Activated CD8-positive, alpha-beta T cell treated with anti-CD3 and anti-CD28 coated beads for 36 hours (primary cell): ENCODE measurements at regions of chr10 and their contacts with region 1.

Region 1: DNA sequence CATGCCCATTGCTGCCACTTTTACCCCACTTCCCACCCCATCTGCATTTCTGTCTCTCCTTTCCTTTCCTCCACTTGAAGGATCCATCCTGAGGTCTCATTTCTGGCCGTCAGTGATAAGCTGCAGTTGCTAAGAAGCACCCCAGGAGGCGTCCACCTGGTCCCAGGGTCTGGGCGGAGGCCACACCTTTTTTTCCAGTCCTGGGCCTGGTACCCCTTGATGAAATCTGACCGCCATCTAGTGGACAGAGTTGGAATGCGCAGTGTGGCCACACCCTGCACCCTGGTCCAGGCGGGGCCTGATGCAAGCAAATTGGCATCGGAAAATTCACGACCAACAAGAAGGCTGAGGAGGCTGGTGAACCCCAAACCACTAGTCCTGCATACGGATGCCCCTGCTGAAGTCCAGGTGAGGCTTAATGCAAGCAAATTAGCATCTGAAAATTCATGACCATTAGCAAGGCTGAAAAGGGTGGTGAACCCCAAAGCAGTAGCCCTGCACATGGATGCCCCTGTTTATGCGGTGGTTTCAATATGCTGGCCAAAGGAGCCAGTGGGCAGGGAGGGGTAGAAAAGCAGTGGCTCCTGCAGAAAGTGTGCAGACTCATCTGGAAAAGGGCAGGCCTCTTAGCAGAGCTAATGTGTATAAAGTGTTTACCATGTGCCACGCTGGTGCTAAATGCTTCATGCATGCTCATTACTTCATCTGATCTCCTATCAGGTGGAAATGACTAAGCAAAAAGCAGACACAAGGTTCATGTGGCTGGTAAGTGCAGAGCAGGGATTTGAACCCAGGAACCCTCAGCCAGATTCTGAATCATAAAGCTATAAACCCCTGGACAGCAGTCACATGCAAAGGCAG is 43.2 kb downstream of the GPAM start:
- DNase-seq: peak; percentile 89
- ATAC-seq: peak; percentile 100
- H3K4me3 Mint-ChIP-seq: no peak overlapping the region
- H3K27ac Mint-ChIP-seq: no peak overlapping the region
- H3K4me1 Mint-ChIP-seq: no peaks in the 10 kb centered on the region
- H3K27me3 Mint-ChIP-seq: peaks cover 3% of the 10 kb centered on the region
- CTCF ChIP-seq: peak; percentile 86

Region 2: GRCh38 chr10:111756217-111757061 is 383.9 kb before region 1 on chr10:
- CTCF ChIA-PET with region 1: interaction called, 22 read pairs
- POLR2A ChIA-PET with region 1: no interaction called
- intact Hi-C with region 1: no loop called
- DNase-seq: peak; percentile 34
- ATAC-seq: no peak
- H3K4me3 Mint-ChIP-seq: no peak overlapping the region
- H3K27ac Mint-ChIP-seq: no peak overlapping the region
- H3K4me1 Mint-ChIP-seq: no peaks in the 10 kb centered on the region
- H3K27me3 Mint-ChIP-seq: peaks cover 9% of the 10 kb centered on the region
- CTCF ChIP-seq: peak; percentile 23

Region 3: DNA sequence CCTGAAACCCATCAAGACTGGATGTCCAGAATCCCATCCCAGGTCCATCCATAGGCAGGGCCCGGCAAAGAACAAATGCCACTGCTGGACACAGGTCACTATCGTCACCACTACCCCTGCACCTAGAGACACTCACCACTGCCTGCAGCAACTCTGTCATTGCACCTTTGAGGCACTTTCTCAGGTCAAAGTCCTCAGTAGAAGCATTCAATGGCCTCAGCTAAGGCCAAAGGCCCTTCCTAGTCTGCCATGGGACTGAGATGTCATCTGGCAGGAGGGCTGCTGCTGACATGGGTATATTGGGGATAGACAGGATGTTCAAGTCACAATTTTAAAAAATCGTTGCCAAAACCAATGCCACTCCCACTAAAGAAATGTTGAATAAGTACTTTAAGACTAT is 15.5 kb before region 1 on chr10:
- CTCF ChIA-PET with region 1: interaction called, 86 read pairs
- POLR2A ChIA-PET with region 1: no interaction called
- intact Hi-C with region 1: no loop called
- DNase-seq: no peak
- ATAC-seq: no peak
- H3K4me3 Mint-ChIP-seq: no peak overlapping the region
- H3K27ac Mint-ChIP-seq: no peak overlapping the region
- H3K4me1 Mint-ChIP-seq: no peaks in the 10 kb centered on the region
- H3K27me3 Mint-ChIP-seq: no peaks in the 10 kb centered on the region
- CTCF ChIP-seq: no peak

Region 4: DNA sequence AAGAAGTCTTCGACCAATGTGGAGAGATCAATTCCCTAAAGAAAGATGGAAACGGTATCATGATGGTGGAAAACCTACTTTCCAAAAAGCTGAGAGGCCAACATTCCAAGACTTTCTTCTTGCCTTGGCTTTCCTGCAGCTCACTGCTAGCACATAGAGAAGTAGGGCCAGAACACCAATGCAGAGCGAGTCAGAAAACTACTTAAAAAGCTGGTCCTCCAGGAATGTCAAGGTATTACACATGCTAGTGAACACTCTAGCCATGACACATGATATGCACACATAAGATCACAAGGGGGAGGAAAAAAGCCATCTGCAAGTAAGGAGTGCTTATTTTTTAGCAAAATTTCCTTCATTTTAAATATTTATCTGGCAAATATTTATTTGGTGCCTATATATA is 20.5 kb after region 1 on chr10:
- CTCF ChIA-PET with region 1: interaction called, 16 read pairs
- POLR2A ChIA-PET with region 1: no interaction called
- intact Hi-C with region 1: no loop called
- DNase-seq: no peak
- ATAC-seq: no peak
- H3K4me3 Mint-ChIP-seq: no peak overlapping the region
- H3K27ac Mint-ChIP-seq: no peak overlapping the region
- H3K4me1 Mint-ChIP-seq: no peaks in the 10 kb centered on the region
- H3K27me3 Mint-ChIP-seq: no peaks in the 10 kb centered on the region
- CTCF ChIP-seq: no peak

Region 5: GRCh38 chr10:112183329-112184051 is 43.1 kb after region 1 on chr10 and contains the start of gene GPAM:
- CTCF ChIA-PET with region 1: interaction called, 15 read pairs
- POLR2A ChIA-PET with region 1: no interaction called
- intact Hi-C with region 1: no loop called
- DNase-seq: peak; percentile 98
- ATAC-seq: peak; percentile 96
- H3K4me3 Mint-ChIP-seq: peak within 1 kb of the TSS; percentile 96
- H3K27ac Mint-ChIP-seq: peak within 1 kb of the TSS; percentile 92
- H3K4me1 Mint-ChIP-seq: peaks cover 18% of the 10 kb centered on the region
- H3K27me3 Mint-ChIP-seq: no peaks in the 10 kb centered on the region
- CTCF ChIP-seq: no peak
- total RNA-seq, gene GPAM: 7.4 to 8.6 TPM

Region 6: GRCh38 chr10:112295853-112296830 is 155.8 kb after region 1 on chr10:
- CTCF ChIA-PET with region 1: no interaction called
- POLR2A ChIA-PET with region 1: no interaction called
- intact Hi-C with region 1: no loop called
- DNase-seq: no peak
- ATAC-seq: no peak
- H3K4me3 Mint-ChIP-seq: no peak overlapping the region
- H3K27ac Mint-ChIP-seq: no peak overlapping the region
- H3K4me1 Mint-ChIP-seq: no peaks in the 10 kb centered on the region
- H3K27me3 Mint-ChIP-seq: peaks cover 5% of the 10 kb centered on the region
- CTCF ChIP-seq: no peak

Region 7: GRCh38 chr10:112314822-112315474 is 174.6 kb after region 1 on chr10:
- CTCF ChIA-PET with region 1: interaction called, 29 read pairs
- POLR2A ChIA-PET with region 1: no interaction called
- intact Hi-C with region 1: loop called (anchors 10 kb)
- DNase-seq: peak; percentile 88
- ATAC-seq: peak; percentile 87
- H3K4me3 Mint-ChIP-seq: no peak overlapping the region
- H3K27ac Mint-ChIP-seq: no peak overlapping the region
- H3K4me1 Mint-ChIP-seq: no peaks in the 10 kb centered on the region
- H3K27me3 Mint-ChIP-seq: peaks cover 19% of the 10 kb centered on the region
- CTCF ChIP-seq: peak; percentile 91